Activated CD8-positive, alpha-beta T cell treated with anti-CD3 and anti-CD28 coated beads, Interleukin-2, amount 10 ng/mL, durations not matched to agents 7 days and 5 days (primary cell): ENCODE measurements at regions of chr16 and their contacts with region 1.

Region 1: DNA sequence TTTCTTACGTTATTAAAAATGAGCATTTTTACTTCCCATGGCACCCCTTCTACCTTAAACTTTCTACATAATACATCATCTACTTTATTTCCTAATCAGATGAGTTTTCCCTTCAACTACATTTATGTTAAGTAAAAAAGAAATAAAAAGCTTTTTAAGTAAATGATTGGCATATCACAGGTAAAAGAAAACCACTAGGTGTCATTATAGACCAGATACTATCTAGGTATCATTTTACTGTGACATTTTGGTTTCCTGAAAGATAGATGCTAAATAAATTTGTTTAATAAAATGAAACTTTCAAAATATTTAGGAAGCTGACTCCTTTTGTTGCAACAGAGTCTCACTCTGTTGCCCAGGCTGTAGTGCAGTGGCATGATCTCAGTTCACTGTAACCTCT is 3.8 kb upstream of the CMTM1 start:
- DNase-seq: no peak
- ATAC-seq: no peak
- H3K4me3 Mint-ChIP-seq: no peak overlapping the region
- H3K27ac Mint-ChIP-seq: no peak overlapping the region
- H3K4me1 Mint-ChIP-seq: peaks cover 65% of the 10 kb centered on the region
- H3K27me3 Mint-ChIP-seq: no peaks in the 10 kb centered on the region

Region 2: GRCh38 chr16:66315210-66315825 is 247.1 kb before region 1 on chr16:
- CTCF ChIA-PET with region 1: no interaction called
- POLR2A ChIA-PET with region 1: no interaction called
- DNase-seq: peak; percentile 70
- ATAC-seq: peak; percentile 94
- H3K4me3 Mint-ChIP-seq: no peak overlapping the region
- H3K27ac Mint-ChIP-seq: no peak overlapping the region
- H3K4me1 Mint-ChIP-seq: no peaks in the 10 kb centered on the region
- H3K27me3 Mint-ChIP-seq: peaks cover 5% of the 10 kb centered on the region

Region 3: GRCh38 chr16:66511615-66512500 is 50.5 kb before region 1 on chr16:
- CTCF ChIA-PET with region 1: interaction called, 12 read pairs
- POLR2A ChIA-PET with region 1: no interaction called
- DNase-seq: no peak
- ATAC-seq: no peak
- H3K4me3 Mint-ChIP-seq: no peak overlapping the region
- H3K27ac Mint-ChIP-seq: no peak overlapping the region
- H3K4me1 Mint-ChIP-seq: peaks cover 28% of the 10 kb centered on the region
- H3K27me3 Mint-ChIP-seq: no peaks in the 10 kb centered on the region

Region 4: GRCh38 chr16:66580605-66581209 is 18.3 kb after region 1 on chr16:
- CTCF ChIA-PET with region 1: interaction called, 21 read pairs
- POLR2A ChIA-PET with region 1: no interaction called
- DNase-seq: no peak
- ATAC-seq: no peak
- H3K4me3 Mint-ChIP-seq: no peak overlapping the region
- H3K27ac Mint-ChIP-seq: no peak overlapping the region
- H3K4me1 Mint-ChIP-seq: peaks cover 18% of the 10 kb centered on the region
- H3K27me3 Mint-ChIP-seq: peaks cover 34% of the 10 kb centered on the region

Region 5: GRCh38 chr16:66588981-66589713 is 26.7 kb after region 1 on chr16:
- CTCF ChIA-PET with region 1: interaction called, 47 read pairs
- POLR2A ChIA-PET with region 1: no interaction called
- DNase-seq: peak; percentile 83
- ATAC-seq: peak; percentile 88
- H3K4me3 Mint-ChIP-seq: peak overlapping the region; percentile 55
- H3K27ac Mint-ChIP-seq: peak overlapping the region; percentile 55
- H3K4me1 Mint-ChIP-seq: peaks cover 52% of the 10 kb centered on the region
- H3K27me3 Mint-ChIP-seq: no peaks in the 10 kb centered on the region

Region 6: GRCh38 chr16:66596986-66597848 is 34.8 kb after region 1 on chr16:
- CTCF ChIA-PET with region 1: interaction called, 11 read pairs
- POLR2A ChIA-PET with region 1: no interaction called
- DNase-seq: peak; percentile 57
- ATAC-seq: peak; percentile 45
- H3K4me3 Mint-ChIP-seq: peak overlapping the region; percentile 61
- H3K27ac Mint-ChIP-seq: peak overlapping the region; percentile 92
- H3K4me1 Mint-ChIP-seq: peaks cover 51% of the 10 kb centered on the region
- H3K27me3 Mint-ChIP-seq: no peaks in the 10 kb centered on the region

Region 7: DNA sequence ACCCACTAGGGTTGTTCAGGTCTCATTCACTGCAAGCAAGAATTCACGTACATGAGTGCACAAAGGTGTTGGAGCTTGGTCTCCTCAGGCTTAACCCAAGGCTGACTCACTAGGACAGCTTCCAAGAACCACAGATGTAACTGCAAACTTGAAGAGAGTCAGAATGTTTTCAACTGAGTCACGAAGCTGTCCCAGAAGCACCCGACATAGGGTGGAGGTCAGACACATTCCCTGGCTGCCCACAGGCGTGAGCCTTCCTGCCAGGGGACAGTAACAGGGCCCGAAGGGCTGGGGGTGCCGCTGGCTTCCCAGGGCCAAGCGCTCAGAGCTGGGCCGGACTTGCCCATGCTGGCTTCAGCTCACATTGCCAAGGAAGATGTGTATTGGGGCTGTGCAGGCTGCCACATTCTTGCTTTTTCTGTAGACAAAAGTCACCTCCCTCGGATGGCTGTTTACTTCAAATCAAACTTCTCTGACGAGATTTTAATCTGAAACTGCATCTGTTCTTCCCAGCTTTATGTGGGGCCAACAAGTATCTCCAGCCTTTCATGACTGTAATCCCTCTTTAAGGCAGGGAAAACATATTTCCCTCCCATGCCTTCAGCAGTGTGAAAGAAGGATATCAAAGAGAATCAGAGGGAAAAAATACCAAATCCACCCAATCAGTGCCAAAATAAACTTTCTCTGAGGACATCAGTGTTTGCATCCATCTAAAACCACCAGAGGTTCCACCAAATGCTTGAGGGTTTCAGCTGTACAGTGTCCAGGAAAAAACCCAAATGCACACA is 56.4 kb after region 1 on chr16:
- CTCF ChIA-PET with region 1: no interaction called
- POLR2A ChIA-PET with region 1: no interaction called
- DNase-seq: no peak
- ATAC-seq: no peak
- H3K4me3 Mint-ChIP-seq: no peak overlapping the region
- H3K27ac Mint-ChIP-seq: no peak overlapping the region
- H3K4me1 Mint-ChIP-seq: peaks cover 7% of the 10 kb centered on the region
- H3K27me3 Mint-ChIP-seq: no peaks in the 10 kb centered on the region

Region 8: DNA sequence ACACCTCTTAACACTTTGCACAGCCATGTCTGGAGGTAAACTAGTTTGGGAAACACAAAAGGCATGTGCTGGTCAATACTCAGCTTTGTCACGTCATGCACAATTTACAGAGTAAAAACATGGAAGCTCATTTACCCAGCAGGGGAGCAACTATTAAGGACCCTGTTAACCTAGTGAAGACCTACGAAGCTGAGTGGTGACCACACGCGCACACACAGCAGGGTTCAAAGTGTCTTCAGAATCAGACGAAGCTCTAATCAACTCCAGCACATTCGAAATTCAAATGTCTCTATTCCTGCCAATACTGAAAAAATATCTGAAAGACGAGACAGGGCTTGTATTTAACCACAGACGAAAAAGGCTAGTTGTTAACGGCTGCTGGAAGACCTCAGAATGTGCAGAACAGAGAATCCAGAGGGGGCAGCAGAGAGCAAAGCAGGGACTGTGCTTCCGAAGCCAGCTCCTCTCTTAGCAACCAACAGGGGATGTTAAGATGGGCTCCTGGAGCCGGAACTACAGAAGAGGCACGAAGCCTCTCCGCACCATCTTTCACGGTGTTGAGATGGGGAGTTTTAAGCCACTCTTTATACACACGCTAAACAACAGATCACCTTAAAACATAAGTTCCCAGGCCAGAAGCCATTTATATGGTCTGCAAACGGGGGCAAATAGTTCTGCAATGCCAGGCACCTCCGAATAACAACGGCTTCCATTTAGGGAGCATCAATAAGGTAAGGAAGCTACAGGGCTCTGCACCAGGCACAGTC is 88.5 kb after region 1 on chr16:
- CTCF ChIA-PET with region 1: interaction called, 18 read pairs
- POLR2A ChIA-PET with region 1: no interaction called
- DNase-seq: peak; percentile 91
- ATAC-seq: peak; percentile 99
- H3K4me3 Mint-ChIP-seq: peak overlapping the region; percentile 10
- H3K27ac Mint-ChIP-seq: no peak overlapping the region
- H3K4me1 Mint-ChIP-seq: peaks cover 16% of the 10 kb centered on the region
- H3K27me3 Mint-ChIP-seq: peaks cover 7% of the 10 kb centered on the region